Endothelial cell of umbilical vein (primary cell): ENCODE measurements at regions of chr17 and their contacts with region 1.

Region 1: DNA sequence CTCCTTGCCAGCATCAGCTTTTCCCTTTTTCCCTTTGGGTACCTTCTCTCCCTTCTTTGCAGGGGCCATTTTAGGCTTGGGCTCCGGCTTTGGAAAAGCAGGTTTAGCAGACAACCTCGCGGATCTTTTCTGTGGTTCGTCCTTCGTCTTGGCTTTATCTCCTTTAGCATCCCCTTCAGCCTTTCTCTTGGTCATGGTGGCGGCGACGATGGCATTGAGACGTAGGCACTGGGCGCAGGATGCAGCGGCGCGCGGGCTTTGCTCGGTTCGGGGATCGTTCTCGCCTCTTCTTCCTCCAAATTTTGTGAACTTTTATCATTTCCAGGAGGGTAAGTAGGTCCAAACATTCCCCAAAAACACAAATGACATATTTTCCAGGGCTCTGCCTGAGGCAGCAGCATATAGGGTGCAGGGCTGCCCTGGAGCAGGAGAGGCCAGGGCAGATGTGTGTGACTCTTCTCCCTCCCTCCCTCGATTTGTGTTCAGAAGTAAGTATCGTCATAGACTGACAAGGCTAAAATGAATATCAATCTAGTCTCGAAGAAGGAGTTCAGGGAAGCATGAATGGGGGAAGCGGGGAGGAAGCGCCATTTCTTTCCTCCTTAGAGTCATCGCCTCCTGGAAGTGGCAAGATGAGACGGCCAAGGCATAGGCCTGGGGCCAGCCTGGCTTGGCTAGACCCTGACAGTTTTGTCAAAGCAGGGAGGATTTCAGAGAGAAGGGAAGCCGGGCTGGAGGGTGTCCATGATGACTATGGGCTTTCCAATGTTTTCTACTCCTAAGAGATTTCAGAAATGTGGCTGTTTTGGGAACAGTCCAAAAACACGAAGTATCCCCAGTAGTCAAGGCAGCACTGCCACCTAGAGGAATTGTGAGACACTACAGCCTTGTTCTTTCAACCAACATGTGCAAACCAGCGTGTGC is 13.2 kb downstream of the CHCT1 start:
- DNase-seq: peak; percentile 75
- H3K4me3 ChIP-seq: no peak overlapping the region
- H3K27ac ChIP-seq: no peak overlapping the region
- H3K4me1 ChIP-seq: peaks cover 2% of the 10 kb centered on the region
- H3K27me3 ChIP-seq: no peaks in the 10 kb centered on the region
- CTCF ChIP-seq: peak; percentile 75 to 77
- POLR2A ChIP-seq: no peak

Region 2: GRCh38 chr17:60102632-60103096 is 332.8 kb before region 1 on chr17:
- CTCF ChIA-PET with region 1: no interaction called
- POLR2A ChIA-PET with region 1: no interaction called
- dilution Hi-C with region 1: no loop called
- intact Hi-C with region 1: loop called (anchors 10 kb)
- DNase-seq: peak; percentile 53
- H3K4me3 ChIP-seq: peak overlapping the region in 1 of 3 experiments; percentile 22
- H3K27ac ChIP-seq: no peak overlapping the region
- H3K4me1 ChIP-seq: no peaks in the 10 kb centered on the region
- H3K27me3 ChIP-seq: no peaks in the 10 kb centered on the region
- CTCF ChIP-seq: no peak
- POLR2A ChIP-seq: no peak

Region 3: GRCh38 chr17:60421273-60421934 is 14.1 kb before region 1 on chr17:
- CTCF ChIA-PET with region 1: interaction called, 5 read pairs
- POLR2A ChIA-PET with region 1: no interaction called
- dilution Hi-C with region 1: no loop called
- intact Hi-C with region 1: loop called (anchors 1 kb)
- DNase-seq: peak; percentile 71
- H3K4me3 ChIP-seq: peak overlapping the region; percentile 19 to 61 (median 46)
- H3K27ac ChIP-seq: peak overlapping the region; percentile 47
- H3K4me1 ChIP-seq: peaks cover 3% of the 10 kb centered on the region
- H3K27me3 ChIP-seq: no peaks in the 10 kb centered on the region
- CTCF ChIP-seq: peak; percentile 85 to 99
- POLR2A ChIP-seq: no peak